A549 (cell line): ENCODE measurements at regions of chr12 and their contacts with region 1.

Region 1: GRCh38 chr12:6376079-6376869 is 911 bp upstream of the SCNN1A start:
- DNase-seq: peak; percentile 78 to 86
- ATAC-seq: peak; percentile 73 to 77
- H3K4me3 ChIP-seq: no peak overlapping the region
- H3K27ac ChIP-seq: peak overlapping the region; percentile 97 to 99
- H3K4me1 ChIP-seq: peaks cover 71% of the 10 kb centered on the region
- CTCF ChIP-seq: peak; percentile 27
- EP300 ChIP-seq: no peak
- POLR2A ChIP-seq: no peak
- RAD21 ChIP-seq: peak in 1 of 2 experiments; percentile 26; a peak in 3 of 5 replicates

Region 2: DNA sequence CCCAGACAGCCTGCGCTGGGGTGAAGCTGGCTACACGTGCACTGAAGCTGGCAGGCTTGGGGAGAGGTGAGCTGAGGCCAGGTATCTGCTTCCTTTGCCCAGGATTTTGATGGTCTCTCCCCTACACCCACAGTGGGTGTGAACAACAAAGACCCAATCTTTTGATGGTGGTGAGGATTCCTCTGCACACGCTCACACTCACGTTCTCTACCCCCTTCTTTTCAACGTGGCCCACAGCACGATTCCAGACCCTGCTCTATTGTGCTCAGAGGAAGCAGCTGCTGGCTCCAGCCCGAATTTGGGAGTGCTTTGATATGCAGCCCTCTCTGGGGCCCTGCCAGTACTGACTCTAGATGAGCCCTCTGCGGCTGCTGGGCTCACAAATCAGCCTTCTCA is 171.1 kb before region 1 on chr12:
- CTCF ChIA-PET with region 1: no interaction called
- POLR2A ChIA-PET with region 1: no interaction called
- DNase-seq: no peak
- ATAC-seq: no peak
- H3K4me3 ChIP-seq: no peak overlapping the region
- H3K27ac ChIP-seq: peak overlapping the region in 1 of 2 experiments; percentile 16; a peak in 1 of 6 replicates
- H3K4me1 ChIP-seq: peaks cover 33% of the 10 kb centered on the region
- CTCF ChIP-seq: no peak
- EP300 ChIP-seq: no peak
- POLR2A ChIP-seq: no peak
- RAD21 ChIP-seq: no peak

Region 3: GRCh38 chr12:6341417-6342139 is 34.7 kb before region 1 on chr12 and contains the start of gene TNFRSF1A:
- CTCF ChIA-PET with region 1: interaction called, 705 read pairs
- POLR2A ChIA-PET with region 1: interaction called, 141 read pairs
- DNase-seq: peak; percentile 84 to 91
- ATAC-seq: peak; percentile 60 to 62
- H3K4me3 ChIP-seq: peak within 1 kb of the TSS; percentile 91
- H3K27ac ChIP-seq: peak within 1 kb of the TSS; percentile 95 to 98
- H3K4me1 ChIP-seq: peaks cover 72% of the 10 kb centered on the region
- CTCF ChIP-seq: no peak
- EP300 ChIP-seq: peak in 1 of 2 experiments; percentile 42; a peak in 1 of 5 replicates
- POLR2A ChIP-seq: peak; percentile 58
- RAD21 ChIP-seq: peak in 1 of 2 experiments; percentile 27; a peak in 1 of 5 replicates
- polyA plus RNA-seq, gene TNFRSF1A: 460 and 621 TPM in 2 replicates